ENCODE measurements at regions of chr1 and their contacts with region 1.

Region 1: DNA sequence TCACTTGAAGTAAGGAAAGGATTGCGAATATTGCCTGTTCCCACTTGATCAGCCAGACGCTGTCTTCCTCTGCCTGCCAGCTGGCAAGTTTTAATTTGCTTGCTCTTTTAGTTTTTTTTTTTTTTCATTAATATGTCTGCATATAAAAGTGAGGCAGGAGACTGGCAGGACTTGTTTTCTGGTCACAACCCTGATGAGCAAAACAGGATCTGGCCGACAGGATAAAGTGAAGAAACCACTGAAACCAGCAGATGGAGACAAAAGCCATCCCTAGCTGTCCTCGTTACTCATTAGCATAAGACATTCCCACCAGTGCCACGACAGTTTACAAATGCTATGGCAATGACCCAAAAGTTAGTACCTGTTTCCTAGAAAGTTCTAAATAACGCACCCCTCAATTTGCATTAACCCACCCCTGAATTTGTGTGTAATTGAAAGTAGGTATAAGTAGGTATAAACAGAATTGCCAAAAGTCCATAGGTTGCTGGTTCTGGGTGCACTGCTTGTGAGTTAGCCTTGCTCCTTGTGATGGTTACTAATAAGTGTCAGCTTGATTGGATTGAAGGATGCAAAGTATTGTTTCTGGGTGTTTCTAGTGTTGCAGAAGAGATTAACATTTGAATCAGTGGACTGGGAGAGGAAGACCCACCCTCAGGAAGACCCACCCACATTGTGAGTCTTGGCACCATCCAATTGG is 60.8 kb downstream of the ZNF684 start:
- DNase-seq: peak; percentile 62
- H3K4me3 ChIP-seq: no peak overlapping the region
- H3K27ac ChIP-seq: no peak overlapping the region
- H3K4me1 ChIP-seq: no peaks in the 10 kb centered on the region
- H3K27me3 ChIP-seq: no peaks in the 10 kb centered on the region
- CTCF ChIP-seq: peak; percentile 76

Region 2: DNA sequence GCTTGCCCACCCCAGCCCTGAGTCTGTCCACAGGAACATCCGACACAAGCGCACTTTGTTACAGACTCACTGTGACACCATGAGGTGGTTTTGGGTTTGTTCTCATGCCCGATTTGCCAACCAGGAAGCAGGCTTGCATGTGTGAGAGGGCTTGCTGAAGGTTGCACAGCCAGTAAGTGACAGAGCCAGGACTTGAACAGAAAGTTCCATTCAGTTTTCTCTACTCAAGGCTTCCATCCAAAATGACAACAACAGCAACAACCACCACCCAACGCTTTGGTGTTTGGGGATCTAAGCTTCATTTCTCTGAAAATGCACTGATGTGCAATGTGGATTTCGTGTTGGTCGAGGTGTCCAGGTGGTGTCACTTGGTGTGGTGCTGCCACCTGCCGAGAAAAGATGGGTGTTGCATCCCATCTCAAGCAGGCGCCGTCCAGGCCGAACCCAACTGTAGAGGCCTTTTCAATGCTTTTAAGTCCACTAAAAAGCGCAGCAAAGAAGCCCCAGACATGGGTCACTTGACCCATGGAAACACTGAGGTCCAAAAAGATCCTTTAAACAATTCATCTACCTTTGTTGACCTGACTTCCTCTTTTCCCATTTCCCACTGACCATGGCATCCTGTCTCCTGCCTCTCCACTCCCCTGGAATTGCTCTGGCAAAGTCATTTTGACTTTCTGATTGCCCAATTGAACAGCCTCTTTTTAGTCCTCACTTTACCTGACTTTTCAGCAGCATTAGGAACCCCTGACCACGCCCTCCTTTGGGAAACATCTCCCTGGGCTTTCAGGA is 257.7 kb after region 1 on chr1:
- CTCF ChIA-PET with region 1: interaction called, 3 read pairs
- POLR2A ChIA-PET with region 1: no interaction called
- intact Hi-C with region 1: loop called (anchors 1 kb)
- DNase-seq: peak; percentile 73
- H3K4me3 ChIP-seq: no peak overlapping the region
- H3K27ac ChIP-seq: no peak overlapping the region
- H3K4me1 ChIP-seq: no peaks in the 10 kb centered on the region
- H3K27me3 ChIP-seq: no peaks in the 10 kb centered on the region
- CTCF ChIP-seq: peak; percentile 89